ENCODE measurements at regions of chr10 and their contacts with region 1.

Region 1: GRCh38 chr10:104121520-104122224 is at the start of gene SFR1:
- DNase-seq: peak; percentile 99
- ATAC-seq: peak; percentile 93
- H3K4me3 Mint-ChIP-seq: peak within 1 kb of the TSS; percentile 91
- H3K27ac Mint-ChIP-seq: peak within 1 kb of the TSS; percentile 97
- H3K4me1 Mint-ChIP-seq: peaks cover 47% of the 10 kb centered on the region
- H3K27me3 Mint-ChIP-seq: no peaks in the 10 kb centered on the region
- total RNA-seq, gene SFR1: 17.2 to 20.5 TPM

Region 2: DNA sequence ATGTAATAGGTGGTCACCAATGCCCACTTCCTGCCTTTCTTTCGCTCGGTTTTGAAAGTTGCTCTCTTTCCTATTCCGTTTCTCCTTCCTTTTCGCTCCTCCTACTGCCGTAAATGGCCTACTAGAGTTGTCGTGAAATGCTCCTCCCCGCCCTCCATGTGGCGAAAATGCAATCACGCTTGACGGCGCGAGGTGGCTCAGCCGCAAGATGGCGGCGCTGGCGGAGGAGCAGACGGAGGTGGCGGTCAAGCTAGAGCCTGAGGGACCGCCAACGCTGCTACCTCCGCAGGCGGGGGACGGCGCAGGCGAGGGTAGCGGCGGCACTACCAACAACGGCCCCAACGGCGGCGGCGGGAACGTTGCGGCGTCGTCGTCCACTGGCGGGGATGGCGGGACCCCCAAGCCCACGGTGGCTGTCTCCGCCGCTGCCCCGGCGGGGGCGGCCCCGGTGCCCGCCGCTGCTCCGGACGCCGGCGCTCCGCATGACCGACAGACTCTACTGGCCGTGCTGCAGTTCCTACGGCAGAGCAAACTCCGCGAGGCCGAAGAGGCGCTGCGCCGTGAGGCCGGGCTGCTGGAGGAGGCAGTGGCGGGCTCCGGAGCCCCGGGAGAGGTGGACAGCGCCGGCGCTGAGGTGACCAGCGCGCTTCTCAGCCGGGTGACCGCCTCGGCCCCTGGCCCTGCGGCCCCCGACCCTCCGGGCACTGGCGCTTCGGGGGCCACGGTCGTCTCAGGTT is 753.7 kb before region 1 on chr10 and contains the start of gene TAF5:
- CTCF ChIA-PET with region 1: no interaction called
- POLR2A ChIA-PET with region 1: no interaction called
- intact Hi-C with region 1: loop called in 1 of 2 experiments (anchors 5 kb)
- DNase-seq: peak; percentile 95
- ATAC-seq: peak; percentile 61
- H3K4me3 Mint-ChIP-seq: peak within 1 kb of the TSS; percentile 81
- H3K27ac Mint-ChIP-seq: peak within 1 kb of the TSS; percentile 85
- H3K4me1 Mint-ChIP-seq: peaks cover 16% of the 10 kb centered on the region
- H3K27me3 Mint-ChIP-seq: no peaks in the 10 kb centered on the region
- total RNA-seq, gene TAF5: 11.2 to 11.4 TPM

Region 3: DNA sequence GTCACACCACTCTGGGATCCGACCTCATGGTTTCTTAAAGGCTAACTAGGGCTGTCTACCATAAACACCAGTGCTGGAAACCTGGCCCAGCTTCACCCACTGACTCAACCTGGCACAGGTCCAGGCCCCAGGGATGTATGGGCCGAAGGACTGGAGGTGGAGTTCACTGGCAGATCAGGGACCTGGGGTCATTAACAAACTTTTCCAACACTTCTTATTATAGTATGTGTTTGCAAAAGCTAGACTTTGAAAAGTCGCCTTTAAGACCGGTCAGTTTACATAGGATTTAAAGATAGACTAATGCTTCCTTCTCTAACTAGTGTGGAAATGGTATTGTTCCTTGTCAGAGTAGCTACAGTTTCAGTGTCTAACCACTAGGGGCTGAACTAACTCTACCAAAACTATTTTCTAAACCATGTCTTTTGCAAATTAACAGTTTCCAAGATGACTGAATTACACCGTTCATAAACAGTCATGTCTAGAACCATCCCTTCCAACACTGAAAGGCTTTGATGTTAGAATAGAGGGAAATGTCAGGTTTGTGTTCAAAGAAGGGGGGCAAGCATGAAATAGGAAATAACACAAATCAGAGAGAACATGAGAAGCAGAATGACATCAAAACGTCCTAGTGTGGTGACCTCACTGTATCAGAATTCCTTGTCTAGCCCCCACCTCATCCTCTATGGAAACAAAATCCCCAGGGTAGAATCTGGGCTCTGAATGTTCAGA is 233.4 kb before region 1 on chr10:
- CTCF ChIA-PET with region 1: interaction called, 12 read pairs
- POLR2A ChIA-PET with region 1: no interaction called
- intact Hi-C with region 1: loop called (anchors 1 kb)
- DNase-seq: peak; percentile 57
- ATAC-seq: peak; percentile 82
- H3K4me3 Mint-ChIP-seq: no peak overlapping the region
- H3K27ac Mint-ChIP-seq: peak overlapping the region; percentile 83
- H3K4me1 Mint-ChIP-seq: peaks cover 35% of the 10 kb centered on the region
- H3K27me3 Mint-ChIP-seq: no peaks in the 10 kb centered on the region

Region 4: DNA sequence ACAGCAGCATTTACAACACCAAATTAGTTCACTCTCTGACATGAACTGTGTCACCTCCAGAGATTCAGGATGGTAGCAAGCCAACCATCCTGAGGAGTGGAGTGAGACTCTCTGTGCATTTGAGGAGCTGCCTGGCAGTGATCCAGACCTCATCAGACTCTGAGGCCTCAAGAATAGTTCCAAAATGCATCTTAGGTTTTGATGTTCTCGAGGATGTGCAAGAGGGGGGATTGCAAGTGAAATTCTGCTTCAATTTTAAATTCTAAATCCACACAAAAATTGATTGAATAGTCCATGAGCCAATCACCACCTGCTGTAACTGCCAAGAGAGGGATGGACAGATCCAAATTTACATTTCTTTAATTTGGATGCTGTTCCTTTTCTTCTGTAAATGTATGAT is 105.0 kb before region 1 on chr10:
- CTCF ChIA-PET with region 1: interaction called, 5 read pairs
- POLR2A ChIA-PET with region 1: no interaction called
- intact Hi-C with region 1: loop called in 1 of 2 experiments (anchors 1 kb)
- DNase-seq: no peak
- ATAC-seq: no peak
- H3K4me3 Mint-ChIP-seq: no peak overlapping the region
- H3K27ac Mint-ChIP-seq: no peak overlapping the region
- H3K4me1 Mint-ChIP-seq: peaks cover 21% of the 10 kb centered on the region
- H3K27me3 Mint-ChIP-seq: no peaks in the 10 kb centered on the region

Region 5: DNA sequence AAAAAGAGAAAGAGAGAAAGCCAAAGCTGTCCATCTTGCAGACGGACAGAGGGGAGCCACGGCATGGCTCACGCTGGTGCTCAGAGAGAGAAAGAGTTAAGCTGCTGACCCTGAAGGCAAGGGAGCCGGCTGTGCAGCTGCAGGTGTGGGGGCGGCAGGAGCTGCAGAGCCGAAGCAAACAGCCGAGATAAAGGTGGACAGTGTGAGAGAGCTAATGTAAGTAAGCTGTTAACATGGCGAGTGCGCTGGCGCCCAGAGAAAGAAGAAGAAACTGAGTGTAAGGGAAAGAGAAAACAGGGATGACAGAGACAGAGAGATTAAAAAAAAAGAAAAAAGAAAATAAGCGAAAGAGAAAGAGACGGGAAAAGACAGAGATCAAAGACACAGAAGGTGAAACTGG is 54.1 kb before region 1 on chr10:
- CTCF ChIA-PET with region 1: no interaction called
- POLR2A ChIA-PET with region 1: no interaction called
- intact Hi-C with region 1: no loop called
- DNase-seq: no peak
- ATAC-seq: no peak
- H3K4me3 Mint-ChIP-seq: no peak overlapping the region
- H3K27ac Mint-ChIP-seq: no peak overlapping the region
- H3K4me1 Mint-ChIP-seq: no peaks in the 10 kb centered on the region
- H3K27me3 Mint-ChIP-seq: no peaks in the 10 kb centered on the region

Region 6: DNA sequence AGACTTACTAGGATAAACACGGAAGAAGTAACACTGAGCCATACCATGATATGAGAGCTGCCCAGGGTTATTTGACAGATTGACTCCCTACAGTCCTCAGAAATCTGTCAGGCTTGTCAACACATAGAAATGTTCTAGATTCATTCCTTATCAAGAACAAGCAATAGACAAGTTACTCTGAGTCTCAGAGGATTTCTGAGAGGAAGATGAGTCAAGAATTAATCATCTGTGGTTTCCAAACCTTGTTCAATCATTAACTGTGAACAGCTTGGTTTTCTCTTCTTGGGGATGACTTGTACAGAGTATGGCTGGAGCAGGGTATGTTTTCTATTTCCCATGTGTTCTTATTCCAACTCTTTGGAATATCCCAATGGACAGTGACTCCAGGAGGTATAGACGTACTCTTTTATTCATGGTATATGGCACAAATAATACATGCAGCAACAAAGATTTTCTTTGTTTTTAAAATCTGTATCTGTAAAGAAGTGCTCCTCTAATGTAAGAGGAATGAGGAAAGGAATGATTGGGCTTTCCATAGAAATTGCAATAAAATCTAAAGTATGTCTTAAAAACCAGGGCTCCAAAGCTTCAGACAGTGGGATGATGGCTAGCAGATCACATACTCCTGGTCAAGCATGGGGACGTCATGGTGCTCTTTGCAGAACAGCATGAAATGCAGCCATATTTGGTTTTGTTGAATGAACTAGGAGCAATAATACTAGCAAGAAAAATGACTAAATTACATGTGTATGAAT is 11.6 kb before region 1 on chr10:
- CTCF ChIA-PET with region 1: interaction called, 19 read pairs
- POLR2A ChIA-PET with region 1: interaction called, 10 read pairs
- intact Hi-C with region 1: no loop called
- DNase-seq: no peak
- ATAC-seq: peak; percentile 99
- H3K4me3 Mint-ChIP-seq: no peak overlapping the region
- H3K27ac Mint-ChIP-seq: no peak overlapping the region
- H3K4me1 Mint-ChIP-seq: peaks cover 13% of the 10 kb centered on the region
- H3K27me3 Mint-ChIP-seq: peaks cover 7% of the 10 kb centered on the region

Region 7: GRCh38 chr10:104268716-104269645 is 147.3 kb after region 1 on chr10 and contains the start of gene GSTO2:
- CTCF ChIA-PET with region 1: interaction called, 8 read pairs
- POLR2A ChIA-PET with region 1: interaction called, 10 read pairs
- intact Hi-C with region 1: loop called (anchors 1 kb)
- DNase-seq: peak; percentile 99
- ATAC-seq: peak; percentile 90
- H3K4me3 Mint-ChIP-seq: peak within 1 kb of the TSS; percentile 77
- H3K27ac Mint-ChIP-seq: peak within 1 kb of the TSS; percentile 94
- H3K4me1 Mint-ChIP-seq: peaks cover 42% of the 10 kb centered on the region
- H3K27me3 Mint-ChIP-seq: no peaks in the 10 kb centered on the region
- total RNA-seq, gene GSTO2: 2.1 to 2.8 TPM